ENCODE measurements at regions of chr3 and their contacts with region 1.

Region 1: DNA sequence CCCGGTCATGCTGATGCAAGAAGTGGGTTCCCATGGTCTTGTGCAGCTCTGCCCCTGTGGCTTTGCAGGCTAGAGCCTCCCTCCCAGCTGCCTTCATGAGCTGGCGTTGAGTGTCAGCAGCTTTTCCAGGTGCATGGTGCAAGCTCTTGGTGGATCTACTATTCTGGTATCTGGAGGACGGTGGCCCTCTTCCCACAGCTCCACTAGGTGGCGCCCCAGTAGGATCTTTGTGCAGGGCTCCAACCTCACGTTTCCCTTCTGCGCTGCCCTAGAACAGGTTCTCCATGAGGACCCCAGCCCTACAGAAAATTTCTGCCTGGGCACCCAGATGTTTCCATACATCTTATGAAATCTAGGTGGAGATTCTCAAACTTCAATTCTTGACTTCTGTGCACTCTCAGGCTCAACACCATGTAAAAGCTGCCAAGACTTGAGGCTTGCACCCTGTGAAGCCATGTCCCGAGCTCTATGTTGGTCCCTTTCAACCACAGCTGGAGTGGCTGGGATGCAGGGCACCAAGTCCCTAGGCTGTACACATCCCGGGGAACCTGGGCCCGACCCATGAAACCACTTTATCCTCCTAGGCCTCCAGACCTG is 238.4 kb upstream of the MDFIC2 start:
- DNase-seq: no peak
- ATAC-seq: peak; percentile 93
- H3K4me3 ChIP-seq: no peak overlapping the region
- H3K27ac ChIP-seq: no peak overlapping the region
- H3K4me1 ChIP-seq: no peaks in the 10 kb centered on the region
- H3K27me3 ChIP-seq: no peaks in the 10 kb centered on the region
- CTCF ChIP-seq: peak; percentile 56 to 71 (median 57)
- EP300 ChIP-seq: no peak
- POLR2A ChIP-seq: no peak
- RAD21 ChIP-seq: peak; percentile 67

Region 2: GRCh38 chr3:70231266-70231701 is 319.5 kb before region 1 on chr3:
- CTCF ChIA-PET with region 1: no interaction called
- POLR2A ChIA-PET with region 1: no interaction called
- RAD21 ChIA-PET with region 1: no interaction called
- SMC1A ChIA-PET with region 1: no interaction called
- in situ Hi-C with region 1: no loop called
- intact Hi-C with region 1: no loop called
- DNase-seq: no peak
- ATAC-seq: no peak
- H3K4me3 ChIP-seq: no peak overlapping the region
- H3K27ac ChIP-seq: no peak overlapping the region
- H3K4me1 ChIP-seq: no peaks in the 10 kb centered on the region
- H3K27me3 ChIP-seq: no peaks in the 10 kb centered on the region; a peak in 1 of 4 replicates
- CTCF ChIP-seq: no peak
- EP300 ChIP-seq: no peak
- POLR2A ChIP-seq: no peak
- RAD21 ChIP-seq: no peak

Region 3: DNA sequence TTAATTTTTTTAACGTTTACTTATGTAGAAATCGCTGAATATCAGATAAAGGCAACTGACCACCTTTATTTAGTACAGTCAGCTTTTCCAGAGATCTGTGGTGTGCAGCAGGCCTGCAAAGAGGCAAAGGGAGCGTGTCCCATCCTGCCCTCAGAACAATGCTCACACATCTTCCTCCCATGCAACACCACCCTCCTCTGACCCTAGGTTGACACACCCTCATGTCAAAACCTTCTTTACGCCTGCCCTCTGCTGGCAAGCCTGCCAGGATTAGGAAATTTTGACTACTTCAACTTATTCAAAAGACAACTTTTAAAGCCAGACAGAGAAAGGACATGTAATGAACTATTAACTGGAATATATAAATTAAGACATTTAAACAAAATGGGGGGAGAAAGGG is 519.0 kb after region 1 on chr3:
- CTCF ChIA-PET with region 1: no interaction called
- POLR2A ChIA-PET with region 1: no interaction called
- RAD21 ChIA-PET with region 1: no interaction called
- SMC1A ChIA-PET with region 1: interaction called, 3 read pairs
- in situ Hi-C with region 1: no loop called
- intact Hi-C with region 1: loop called (anchors 5 kb)
- DNase-seq: no peak
- ATAC-seq: peak; percentile 77
- H3K4me3 ChIP-seq: no peak overlapping the region
- H3K27ac ChIP-seq: no peak overlapping the region
- H3K4me1 ChIP-seq: no peaks in the 10 kb centered on the region
- H3K27me3 ChIP-seq: peaks cover 4 to 9% of the 10 kb centered on the region in 2 experiments; a peak in 3 of 4 replicates
- CTCF ChIP-seq: peak; percentile 41 to 53 (median 52); a peak in 5 of 6 replicates
- EP300 ChIP-seq: no peak
- POLR2A ChIP-seq: no peak
- RAD21 ChIP-seq: peak; percentile 71

Region 4: GRCh38 chr3:71583566-71584449 is 1033.0 kb after region 1 on chr3 and contains the start of gene FOXP1:
- CTCF ChIA-PET with region 1: interaction called, 10 read pairs
- POLR2A ChIA-PET with region 1: no interaction called
- RAD21 ChIA-PET with region 1: interaction called, 7 read pairs
- SMC1A ChIA-PET with region 1: interaction called, 3 read pairs
- in situ Hi-C with region 1: no loop called
- intact Hi-C with region 1: loop called (anchors 2 kb)
- DNase-seq: no peak
- ATAC-seq: peak; percentile 67
- H3K4me3 ChIP-seq: peak within 1 kb of the TSS; percentile 67
- H3K27ac ChIP-seq: no peak within 1 kb of the TSS
- H3K4me1 ChIP-seq: peaks cover 9% of the 10 kb centered on the region
- H3K27me3 ChIP-seq: peaks cover 12 to 35% of the 10 kb centered on the region in 2 experiments
- CTCF ChIP-seq: no peak
- EP300 ChIP-seq: no peak
- POLR2A ChIP-seq: no peak
- RAD21 ChIP-seq: no peak
- polyA plus RNA-seq, gene FOXP1: 0.13 to 0.14 TPM

Region 5: GRCh38 chr3:71652781-71653413 is 1102.1 kb after region 1 on chr3:
- CTCF ChIA-PET with region 1: interaction called, 7 read pairs
- POLR2A ChIA-PET with region 1: no interaction called
- RAD21 ChIA-PET with region 1: interaction called, 8 read pairs
- SMC1A ChIA-PET with region 1: interaction called, 3 read pairs
- in situ Hi-C with region 1: loop called (anchors 10 kb)
- intact Hi-C with region 1: loop called (anchors 2 kb)
- DNase-seq: peak; percentile 4
- ATAC-seq: peak; percentile 71
- H3K4me3 ChIP-seq: no peak overlapping the region
- H3K27ac ChIP-seq: no peak overlapping the region
- H3K4me1 ChIP-seq: no peaks in the 10 kb centered on the region
- H3K27me3 ChIP-seq: peaks cover 0 to 2% of the 10 kb centered on the region in 2 experiments; a peak in 1 of 4 replicates
- CTCF ChIP-seq: peak in 1 of 3 experiments; percentile 56; a peak in 4 of 6 replicates
- EP300 ChIP-seq: no peak
- POLR2A ChIP-seq: no peak
- RAD21 ChIP-seq: peak; percentile 62

Region 6: GRCh38 chr3:71681224-71681668 is 1130.4 kb after region 1 on chr3:
- CTCF ChIA-PET with region 1: interaction called, 21 read pairs
- POLR2A ChIA-PET with region 1: no interaction called
- RAD21 ChIA-PET with region 1: interaction called, 6 read pairs
- SMC1A ChIA-PET with region 1: interaction called, 7 read pairs
- in situ Hi-C with region 1: no loop called
- intact Hi-C with region 1: no loop called
- DNase-seq: no peak
- ATAC-seq: peak; percentile 89
- H3K4me3 ChIP-seq: no peak overlapping the region
- H3K27ac ChIP-seq: no peak overlapping the region
- H3K4me1 ChIP-seq: no peaks in the 10 kb centered on the region
- H3K27me3 ChIP-seq: peaks cover 0 to 6% of the 10 kb centered on the region in 2 experiments; a peak in 2 of 4 replicates
- CTCF ChIP-seq: peak; percentile 62 to 77 (median 64)
- EP300 ChIP-seq: no peak
- POLR2A ChIP-seq: no peak
- RAD21 ChIP-seq: peak; percentile 74